ENCODE measurements at regions of chr3 and their contacts with region 1.

Region 1: GRCh38 chr3:128814519-128815317 is 64.7 kb upstream of the ACAD9 start:
- DNase-seq: no peak
- H3K4me3 ChIP-seq: no peak overlapping the region
- H3K27ac ChIP-seq: no peak overlapping the region
- H3K4me1 ChIP-seq: no peaks in the 10 kb centered on the region
- H3K27me3 ChIP-seq: no peaks in the 10 kb centered on the region
- CTCF ChIP-seq: no peak

Region 2: GRCh38 chr3:128879125-128879969 is 64.6 kb after region 1 on chr3 and contains the start of gene ACAD9:
- CTCF ChIA-PET with region 1: no interaction called
- dilution Hi-C with region 1: loop called (anchors 5 kb)
- in situ Hi-C with region 1: no loop called
- intact Hi-C with region 1: no loop called
- DNase-seq: peak; percentile 97
- H3K4me3 ChIP-seq: peak within 1 kb of the TSS; percentile 82 to 98 (median 94)
- H3K27ac ChIP-seq: peak within 1 kb of the TSS; percentile 97
- H3K4me1 ChIP-seq: peaks cover 21% of the 10 kb centered on the region
- H3K27me3 ChIP-seq: no peaks in the 10 kb centered on the region
- CTCF ChIP-seq: no peak
- total RNA-seq, gene ACAD9: 35.2 to 48.7 TPM